Activated T-helper 1 cell treated with anti-CD3 and anti-CD28 coated beads, Interleukin-12 subunit alpha, Interleukin-12 subunit beta, Interleukin-2, Interleukin-4 antibody, amounts not matched to agents 30 ng/mL and 10 ng/mL and 1 ng/mL, durations not matched to agents 14 hours and 24 hours and 36 hours (primary cell): ENCODE measurements at regions of chr22 and their contacts with region 1.

Region 1: DNA sequence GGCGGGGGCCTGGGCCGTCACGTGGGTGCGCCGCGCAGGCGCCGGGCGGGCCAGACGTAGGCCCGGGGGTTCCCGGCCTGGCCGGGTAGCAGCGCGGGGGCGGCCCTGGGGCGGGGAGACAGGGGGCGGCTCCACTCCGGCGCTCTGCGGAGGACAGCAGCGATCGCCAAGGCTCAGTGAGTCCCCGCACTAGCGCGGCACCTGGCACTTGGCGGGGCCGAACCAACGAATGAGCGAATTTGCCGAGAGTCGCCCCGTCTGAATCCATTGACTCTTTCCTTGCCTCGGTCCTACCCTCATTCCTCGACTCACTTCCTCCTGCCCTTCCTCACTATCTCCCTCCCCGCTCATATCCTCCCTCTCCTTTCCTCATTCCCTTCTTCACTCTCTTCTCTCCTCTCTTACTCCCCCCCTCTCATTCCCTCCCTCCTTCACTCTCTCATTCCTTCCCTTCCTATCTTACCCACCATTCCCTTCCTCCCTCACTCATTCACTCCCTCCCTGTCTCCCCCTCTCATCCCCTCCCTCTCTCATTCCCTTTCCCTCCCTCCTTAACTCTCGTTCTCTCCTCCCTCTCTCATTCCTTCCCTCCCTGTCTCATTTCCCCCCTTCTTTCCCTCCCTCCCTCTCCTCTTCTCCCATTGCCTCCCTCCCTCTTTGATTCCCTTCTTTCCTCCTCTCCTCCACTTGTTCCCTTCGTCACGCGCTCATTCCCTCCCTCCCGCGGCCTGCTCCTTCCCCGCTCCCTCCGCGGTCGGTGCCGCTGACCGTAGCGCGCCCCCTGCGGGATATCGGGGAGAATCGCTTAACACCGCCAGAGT is 476 bp upstream of the KLHL22 start:
- DNase-seq: peak; percentile 93
- H3K4me3 Mint-ChIP-seq: peak overlapping the region; percentile 89
- H3K27ac Mint-ChIP-seq: peak overlapping the region; percentile 84
- H3K4me1 Mint-ChIP-seq: peaks cover 13% of the 10 kb centered on the region
- H3K27me3 Mint-ChIP-seq: peaks cover 7% of the 10 kb centered on the region

Region 2: DNA sequence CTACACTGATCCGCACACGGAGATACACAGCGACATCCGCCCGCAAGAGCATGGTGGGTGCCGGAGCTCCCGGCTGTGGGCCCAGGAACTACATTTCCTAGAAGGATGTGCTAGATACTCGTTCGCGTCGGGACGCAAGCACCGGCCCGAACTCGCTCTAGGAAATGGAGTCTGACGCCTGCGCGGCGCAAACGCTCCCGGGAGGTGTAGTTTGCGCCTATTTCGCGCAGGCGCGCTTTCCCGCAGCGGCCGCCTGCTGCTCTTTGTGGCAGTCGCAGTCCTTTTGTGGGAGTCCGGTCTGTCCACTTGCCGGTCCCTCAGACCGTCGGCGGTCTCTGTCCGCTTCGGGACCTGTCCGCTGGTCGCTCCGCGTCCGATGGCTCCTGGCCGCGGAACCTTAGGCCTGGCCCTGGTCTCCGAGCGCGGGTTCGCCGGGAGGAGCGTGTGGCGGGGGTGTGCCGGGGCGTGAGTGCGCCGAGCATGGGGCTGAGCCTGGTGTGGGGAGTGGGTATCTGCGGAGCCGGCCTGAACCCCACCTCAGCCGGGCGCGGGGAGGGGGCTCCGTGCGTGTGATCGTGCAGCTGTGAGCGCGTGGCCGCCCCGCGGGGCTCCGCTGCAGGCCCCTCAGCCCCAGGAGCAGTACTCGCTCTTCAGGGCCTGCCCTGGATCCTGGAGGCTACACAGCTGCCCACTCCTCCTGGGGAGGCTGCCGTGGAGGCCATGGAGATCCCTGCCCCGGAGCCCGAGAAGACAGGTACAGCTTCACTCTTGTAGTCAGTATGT is 102.0 kb before region 1 on chr22 and contains the start of gene ZNF74:
- intact Hi-C with region 1: loop called (anchors 1 kb)
- DNase-seq: peak; percentile 79
- H3K4me3 Mint-ChIP-seq: peak within 1 kb of the TSS; percentile 89
- H3K27ac Mint-ChIP-seq: peak within 1 kb of the TSS; percentile 91
- H3K4me1 Mint-ChIP-seq: peaks cover 22% of the 10 kb centered on the region
- H3K27me3 Mint-ChIP-seq: no peaks in the 10 kb centered on the region
- total RNA-seq, gene ZNF74: 14.3 and 15.2 TPM in 2 replicates

Region 3: DNA sequence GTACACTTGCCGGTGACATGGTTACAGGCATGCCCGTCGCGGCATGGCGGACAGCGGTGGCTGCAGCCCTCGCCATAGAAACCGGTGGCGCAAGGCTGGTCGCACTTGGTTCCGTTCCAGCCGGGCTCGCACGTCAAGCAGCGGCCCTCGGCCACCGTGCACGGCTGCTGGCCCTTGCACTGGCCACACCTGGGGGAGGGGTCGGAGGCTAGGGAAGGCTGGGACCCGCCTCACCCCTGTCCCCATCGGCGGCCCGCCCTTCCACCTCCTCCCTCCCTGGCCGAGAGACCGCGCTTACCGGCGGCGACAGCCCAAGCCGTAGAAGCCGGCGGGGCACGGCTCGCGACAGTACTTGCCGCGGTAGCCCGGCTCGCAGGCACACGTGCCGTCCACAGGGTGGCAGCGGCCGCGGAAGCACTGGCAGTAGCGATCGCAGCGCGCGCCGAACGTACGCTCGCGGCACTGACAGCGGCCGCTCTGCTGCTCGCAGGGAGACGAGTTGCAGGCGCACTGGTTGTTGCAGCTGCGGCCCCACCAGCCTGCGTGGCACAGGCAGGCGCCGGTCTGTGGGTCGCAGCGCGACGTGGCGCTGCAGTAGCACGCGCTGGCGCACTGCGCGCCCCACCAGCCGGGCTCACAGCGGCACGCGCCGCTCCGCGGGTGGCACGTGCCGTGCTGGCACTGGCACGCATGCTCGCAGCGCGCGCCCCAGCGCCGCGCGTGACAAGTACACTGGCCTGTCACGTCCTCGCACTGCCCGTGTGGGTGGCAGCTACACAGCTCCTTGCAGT is 65.2 kb before region 1 on chr22:
- intact Hi-C with region 1: loop called (anchors 2 kb)
- DNase-seq: peak; percentile 29
- H3K4me3 Mint-ChIP-seq: peak overlapping the region; percentile 42
- H3K27ac Mint-ChIP-seq: no peak overlapping the region
- H3K4me1 Mint-ChIP-seq: peaks cover 6% of the 10 kb centered on the region
- H3K27me3 Mint-ChIP-seq: peaks cover 60% of the 10 kb centered on the region

Region 4: DNA sequence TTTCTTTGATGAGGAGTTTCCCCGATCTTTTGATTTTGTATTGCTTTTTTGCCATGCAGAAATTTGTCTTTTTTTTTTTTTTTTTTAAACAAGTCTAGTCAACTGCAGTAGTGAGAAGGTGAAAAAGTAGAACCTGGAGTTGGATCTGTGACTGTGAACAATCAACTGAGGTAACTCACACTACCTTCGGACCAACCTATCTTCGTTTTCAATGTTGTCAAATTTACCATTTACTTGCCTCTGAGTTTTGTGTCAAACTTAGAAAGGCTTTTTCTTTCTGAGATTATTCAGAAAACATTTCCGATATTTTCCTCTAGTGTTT is 21.0 kb before region 1 on chr22:
- intact Hi-C with region 1: loop called (anchors 1 kb)
- DNase-seq: no peak
- H3K4me3 Mint-ChIP-seq: peak overlapping the region; percentile 2
- H3K27ac Mint-ChIP-seq: peak overlapping the region; percentile 48
- H3K4me1 Mint-ChIP-seq: peaks cover 11% of the 10 kb centered on the region
- H3K27me3 Mint-ChIP-seq: no peaks in the 10 kb centered on the region

Region 5: DNA sequence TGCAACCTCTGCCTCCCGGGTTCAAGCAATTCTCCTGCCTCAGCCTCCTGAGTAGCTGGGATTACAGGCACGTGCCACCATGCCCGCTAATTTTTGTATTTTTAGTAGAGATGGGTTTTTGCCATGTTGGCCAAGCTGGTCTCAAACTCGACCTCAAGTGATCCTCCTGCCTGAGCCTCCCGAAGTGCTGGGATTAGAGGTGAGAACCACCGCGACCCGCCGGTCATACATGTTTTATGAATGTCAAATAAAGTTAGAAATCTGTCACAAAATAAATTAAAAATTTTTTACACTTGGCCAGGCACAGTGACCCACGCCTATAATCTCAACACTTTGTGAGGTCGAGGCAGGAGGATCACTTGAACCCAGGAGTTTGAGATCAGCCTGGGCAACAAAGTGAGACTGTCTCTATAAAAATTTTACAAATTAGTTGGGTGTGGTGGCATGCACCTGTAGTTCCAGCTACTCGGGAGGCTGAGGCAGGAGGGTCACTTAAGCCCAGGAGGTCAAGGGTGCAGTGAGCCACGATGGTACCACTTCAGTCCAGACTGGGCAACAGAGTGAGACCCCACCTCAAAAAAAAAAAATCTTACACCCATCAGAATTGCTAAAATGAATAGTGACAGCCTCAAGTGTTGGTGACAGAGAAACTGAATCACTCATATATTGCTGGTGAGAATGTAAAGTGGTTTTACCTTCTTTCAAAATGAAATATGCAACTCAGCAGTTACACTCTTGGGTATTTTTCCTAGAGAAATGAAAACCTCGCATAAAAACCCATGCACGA is 66.6 kb after region 1 on chr22:
- intact Hi-C with region 1: loop called (anchors 2 kb)
- DNase-seq: no peak
- H3K4me3 Mint-ChIP-seq: no peak overlapping the region
- H3K27ac Mint-ChIP-seq: peak overlapping the region; percentile 68
- H3K4me1 Mint-ChIP-seq: peaks cover 65% of the 10 kb centered on the region
- H3K27me3 Mint-ChIP-seq: no peaks in the 10 kb centered on the region